Activated B cell treated with CpG ODN at 0.5 μM for 24 hours (primary cell): ENCODE measurements at regions of chr9 and their contacts with region 1.

Region 1: DNA sequence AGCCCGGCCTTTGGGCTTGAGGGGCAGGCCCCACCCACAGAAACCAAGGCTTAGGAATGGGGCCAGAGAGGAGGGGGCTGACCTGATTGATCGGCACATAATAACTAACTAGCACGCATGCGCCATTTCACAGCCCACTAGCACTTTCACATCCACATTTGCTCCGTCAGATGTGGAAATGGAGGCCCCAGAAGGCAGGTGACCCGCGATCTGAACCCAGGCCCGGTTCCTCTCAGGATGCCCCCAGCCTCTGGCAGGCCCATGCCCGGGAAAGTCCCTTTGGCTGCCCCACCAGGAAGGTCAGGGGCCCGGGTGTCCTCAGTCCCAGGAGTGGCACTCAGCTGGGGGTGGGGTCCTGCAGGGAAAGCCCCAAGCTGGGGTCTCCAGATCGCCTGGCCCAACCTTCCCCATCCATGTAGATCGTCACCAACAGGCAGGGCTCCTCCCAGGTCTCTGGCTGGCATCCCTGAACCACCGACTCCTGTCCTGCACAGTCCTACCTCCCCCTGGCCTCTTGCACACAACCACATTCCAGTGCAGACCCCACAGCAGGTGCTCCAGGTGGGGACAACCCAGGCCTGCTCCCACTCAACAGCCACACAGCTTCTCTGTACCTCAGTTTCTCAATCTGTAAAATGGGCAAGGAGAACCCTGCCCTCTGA is 46.7 kb downstream of the VAV2 start:
- DNase-seq: peak; percentile 72
- ATAC-seq: peak; percentile 71
- H3K4me3 Mint-ChIP-seq: peak overlapping the region; percentile 82
- H3K27ac Mint-ChIP-seq: peak overlapping the region; percentile 94
- H3K4me1 Mint-ChIP-seq: peaks cover 76% of the 10 kb centered on the region
- H3K27me3 Mint-ChIP-seq: no peaks in the 10 kb centered on the region
- CTCF ChIP-seq: no peak

Region 2: DNA sequence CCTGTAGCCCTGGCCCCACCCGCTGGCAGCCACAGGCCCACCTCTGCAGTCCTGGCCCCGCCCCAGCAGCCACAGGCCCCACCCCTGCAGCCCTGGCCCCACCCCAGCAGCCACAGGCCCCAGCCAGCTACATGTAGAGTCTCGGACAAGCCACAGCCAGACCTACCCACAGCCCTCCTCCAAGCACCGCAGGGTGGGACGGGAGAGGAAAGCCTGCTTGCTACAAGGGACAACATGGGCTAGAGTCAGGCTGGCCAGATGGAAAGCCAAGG is 157.8 kb before region 1 on chr9:
- CTCF ChIA-PET with region 1: interaction called, 9 read pairs
- POLR2A ChIA-PET with region 1: interaction called, 6 read pairs
- intact Hi-C with region 1: loop called (anchors 2 kb)
- DNase-seq: peak; percentile 39
- ATAC-seq: peak; percentile 80
- H3K4me3 Mint-ChIP-seq: no peak overlapping the region
- H3K27ac Mint-ChIP-seq: peak overlapping the region; percentile 68
- H3K4me1 Mint-ChIP-seq: peaks cover 90% of the 10 kb centered on the region
- H3K27me3 Mint-ChIP-seq: no peaks in the 10 kb centered on the region
- CTCF ChIP-seq: no peak

Region 3: DNA sequence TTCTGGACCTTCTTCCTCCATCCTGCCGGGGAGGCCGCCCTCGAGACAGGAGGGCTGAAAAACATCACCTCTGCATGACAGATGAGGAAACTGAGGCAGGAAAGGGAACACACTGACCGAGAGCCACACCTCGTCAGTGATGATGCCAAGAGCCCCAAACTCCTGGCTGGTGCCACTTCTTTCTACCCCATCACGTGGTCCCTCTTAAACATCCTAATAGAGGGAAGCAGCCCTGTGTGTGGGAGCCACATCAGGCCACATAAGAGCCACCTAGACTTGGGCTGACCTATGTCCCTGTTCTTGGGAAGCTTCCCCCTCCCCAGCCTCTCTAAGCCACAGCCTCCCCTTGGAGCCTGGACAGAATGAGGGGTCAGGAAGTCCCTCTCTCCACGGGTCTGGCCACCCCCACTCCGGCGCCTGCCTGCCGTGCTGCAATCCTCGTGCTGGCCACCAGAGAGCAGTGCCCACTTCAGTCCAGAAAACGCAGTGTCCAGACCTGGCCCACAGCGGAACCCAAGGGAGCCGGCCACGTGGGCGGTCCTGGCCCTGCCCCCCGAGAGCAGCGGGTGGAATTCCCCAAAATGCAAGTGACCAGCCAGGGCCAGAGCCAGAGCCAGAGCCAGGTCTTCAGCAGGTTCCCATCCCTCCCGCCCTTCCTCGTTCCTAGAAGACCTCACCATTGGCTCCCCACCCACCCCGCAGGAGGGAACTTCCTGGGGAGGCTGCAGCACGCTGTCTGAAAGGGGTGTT is 152.5 kb before region 1 on chr9:
- CTCF ChIA-PET with region 1: no interaction called
- POLR2A ChIA-PET with region 1: no interaction called
- intact Hi-C with region 1: loop called (anchors 2 kb)
- DNase-seq: peak; percentile 70
- ATAC-seq: peak; percentile 88
- H3K4me3 Mint-ChIP-seq: peak overlapping the region; percentile 57
- H3K27ac Mint-ChIP-seq: peak overlapping the region; percentile 66
- H3K4me1 Mint-ChIP-seq: peaks cover 74% of the 10 kb centered on the region
- H3K27me3 Mint-ChIP-seq: no peaks in the 10 kb centered on the region
- CTCF ChIP-seq: peak; percentile 30

Region 4: DNA sequence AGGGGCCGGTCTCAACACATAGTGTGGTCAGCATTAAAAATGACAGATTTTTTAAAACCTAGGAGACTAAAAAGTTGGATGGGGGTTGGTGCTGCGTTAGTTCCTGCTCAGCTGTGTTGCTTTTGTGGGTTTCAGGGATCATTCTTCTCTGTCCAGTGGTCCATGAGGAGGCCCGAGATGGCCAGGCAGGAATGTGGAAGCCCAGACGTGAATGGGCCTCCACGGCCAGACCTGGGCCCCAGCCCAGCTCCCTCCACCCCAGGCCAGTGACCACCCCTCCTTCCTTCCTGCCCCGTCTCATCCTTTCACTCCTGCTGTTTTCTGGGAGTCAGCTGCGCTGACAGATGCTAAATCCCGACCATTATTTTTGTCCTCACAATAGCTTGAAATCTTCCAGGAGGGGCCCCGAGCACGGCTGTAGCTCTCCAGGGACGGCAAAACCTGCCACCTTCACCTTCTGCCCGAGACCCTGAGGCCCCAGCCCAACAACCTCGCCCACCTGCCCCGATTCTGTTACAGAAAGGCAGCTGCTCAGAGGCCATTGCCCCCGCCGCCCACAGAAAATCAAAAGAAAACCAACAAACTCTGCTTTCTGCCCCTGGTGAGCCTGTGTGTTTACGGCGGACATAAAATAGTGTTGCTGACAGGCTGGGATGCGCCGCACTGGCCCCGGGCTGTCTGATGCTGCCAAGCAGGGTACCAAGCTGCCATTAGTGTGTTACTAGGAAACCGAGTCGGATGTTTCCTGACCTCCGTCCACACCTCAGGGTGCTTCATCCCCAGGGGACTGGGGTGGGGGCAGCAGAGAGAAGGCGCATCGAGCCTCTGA is 123.6 kb before region 1 on chr9:
- CTCF ChIA-PET with region 1: no interaction called
- POLR2A ChIA-PET with region 1: interaction called, 7 read pairs
- intact Hi-C with region 1: loop called (anchors 1 kb)
- DNase-seq: no peak
- ATAC-seq: peak; percentile 56
- H3K4me3 Mint-ChIP-seq: peak overlapping the region; percentile 81
- H3K27ac Mint-ChIP-seq: peak overlapping the region; percentile 97
- H3K4me1 Mint-ChIP-seq: peaks cover 81% of the 10 kb centered on the region
- H3K27me3 Mint-ChIP-seq: no peaks in the 10 kb centered on the region
- CTCF ChIP-seq: no peak

Region 5: GRCh38 chr9:133897648-133898047 is 47.8 kb before region 1 on chr9:
- CTCF ChIA-PET with region 1: no interaction called
- POLR2A ChIA-PET with region 1: interaction called, 14 read pairs
- intact Hi-C with region 1: no loop called
- DNase-seq: no peak
- ATAC-seq: no peak
- H3K4me3 Mint-ChIP-seq: no peak overlapping the region
- H3K27ac Mint-ChIP-seq: no peak overlapping the region
- H3K4me1 Mint-ChIP-seq: peaks cover 33% of the 10 kb centered on the region
- H3K27me3 Mint-ChIP-seq: no peaks in the 10 kb centered on the region
- CTCF ChIP-seq: no peak

Region 6: DNA sequence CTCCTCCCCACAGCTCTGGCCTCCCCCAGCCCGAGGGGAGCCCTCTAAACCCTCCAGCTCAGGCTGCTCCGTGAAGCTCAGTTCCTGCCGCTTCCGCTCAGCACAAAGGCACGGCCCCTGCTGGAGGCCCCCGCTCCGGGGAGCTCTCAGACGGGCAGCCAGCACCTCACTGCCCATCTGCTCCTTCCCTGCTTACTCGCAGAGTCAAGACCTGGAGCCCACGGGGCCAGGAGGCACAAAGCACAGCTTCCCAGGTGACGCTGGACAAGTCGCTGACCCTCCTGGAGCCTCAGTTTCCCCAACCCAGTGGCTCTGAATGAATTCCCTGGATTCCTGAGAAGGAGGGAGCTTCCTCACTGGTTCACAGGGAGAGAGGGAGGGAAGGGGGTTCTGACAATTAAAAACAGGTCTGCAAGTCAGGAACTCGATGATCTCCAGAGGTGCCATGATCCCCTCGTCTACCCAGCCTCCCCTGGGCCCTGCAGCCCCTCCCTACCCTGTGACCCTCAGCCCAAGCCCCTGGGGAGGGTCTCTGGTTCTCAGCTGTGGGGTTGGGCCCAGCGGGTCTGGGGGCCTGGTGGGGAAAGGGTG is 10.5 kb after region 1 on chr9:
- CTCF ChIA-PET with region 1: interaction called, 17 read pairs
- POLR2A ChIA-PET with region 1: interaction called, 97 read pairs
- intact Hi-C with region 1: loop called (anchors 1 kb)
- DNase-seq: no peak
- ATAC-seq: peak; percentile 68
- H3K4me3 Mint-ChIP-seq: peak overlapping the region; percentile 86
- H3K27ac Mint-ChIP-seq: peak overlapping the region; percentile 96
- H3K4me1 Mint-ChIP-seq: peaks cover 71% of the 10 kb centered on the region
- H3K27me3 Mint-ChIP-seq: no peaks in the 10 kb centered on the region
- CTCF ChIP-seq: no peak

Region 7: DNA sequence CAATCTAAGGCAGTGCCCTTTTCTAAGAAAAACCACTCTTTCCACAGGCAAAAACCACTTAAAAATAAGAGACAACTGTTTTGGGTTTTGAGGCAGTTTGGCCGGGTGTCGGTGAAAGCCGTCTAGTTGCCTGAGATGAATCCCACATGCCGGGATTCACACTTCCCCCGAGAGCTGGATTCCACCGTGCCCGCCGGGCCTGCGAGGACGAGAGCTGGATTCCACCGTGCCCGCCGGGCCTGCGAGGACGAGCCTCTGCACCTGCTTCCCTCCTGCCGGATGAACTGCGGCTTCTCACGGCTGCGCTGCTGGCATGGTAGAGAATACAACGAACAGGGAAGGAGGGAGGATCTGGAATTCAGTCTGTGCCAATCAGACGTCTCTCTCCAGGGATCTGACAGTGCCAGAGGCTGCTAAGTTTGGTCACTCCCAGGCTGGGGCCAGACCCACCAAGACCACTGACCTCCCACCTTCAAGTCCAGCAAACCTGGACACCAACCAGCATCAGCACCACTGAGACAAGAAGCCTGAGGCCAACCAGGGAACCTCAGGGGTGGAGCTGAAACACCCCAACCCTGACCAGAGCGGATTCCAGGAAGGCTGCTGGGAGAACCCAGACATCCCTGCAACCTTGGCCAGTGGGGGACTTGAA is 23.6 kb after region 1 on chr9:
- CTCF ChIA-PET with region 1: no interaction called
- POLR2A ChIA-PET with region 1: interaction called, 14 read pairs
- intact Hi-C with region 1: loop called (anchors 1 kb)
- DNase-seq: no peak
- ATAC-seq: no peak
- H3K4me3 Mint-ChIP-seq: peak overlapping the region; percentile 60
- H3K27ac Mint-ChIP-seq: no peak overlapping the region
- H3K4me1 Mint-ChIP-seq: peaks cover 90% of the 10 kb centered on the region
- H3K27me3 Mint-ChIP-seq: no peaks in the 10 kb centered on the region
- CTCF ChIP-seq: no peak